Stomach (tissue), 19 donors: ENCODE measurements at regions of chr21 and their contacts with region 1.

Region 1: GRCh38 chr21:45140346-45140940 is 66.1 kb downstream of the ADARB1 start:
- DNase-seq: peak; percentile 71 to 95
- H3K4me3 ChIP-seq: no peak overlapping the region
- H3K27ac ChIP-seq: no peak overlapping the region
- H3K4me1 ChIP-seq: peaks cover 0 to 33% (median 15%) of the 10 kb centered on the region in 4 donors
- H3K27me3 ChIP-seq: no peaks in the 10 kb centered on the region
- CTCF ChIP-seq: peak in 5 of 7 experiments; percentile 58 to 86 (median 70)
- EP300 ChIP-seq: no peak
- POLR2A ChIP-seq: no peak

Region 2: DNA sequence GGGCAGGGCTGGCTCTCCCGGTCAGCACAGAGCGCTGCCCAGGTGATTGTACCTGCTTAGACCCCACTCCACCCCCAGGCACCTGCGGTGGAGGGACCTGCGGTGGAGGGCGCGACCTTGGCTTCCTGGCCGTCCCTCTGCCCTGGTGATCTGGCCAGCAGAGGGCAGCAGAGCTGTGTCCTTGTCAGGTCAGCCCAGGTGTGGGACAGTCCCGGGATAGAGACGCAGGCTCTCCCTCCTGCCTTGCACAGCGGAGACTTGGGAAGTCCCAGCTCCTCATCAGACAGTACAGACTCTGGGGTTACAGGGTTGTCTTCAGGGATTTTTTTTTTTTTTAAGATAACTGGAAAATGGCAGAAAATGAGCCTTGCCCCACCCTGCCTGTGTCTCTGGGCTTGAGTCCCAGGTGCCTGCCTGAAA is 190.7 kb before region 1 on chr21:
- intact Hi-C with region 1: loop called (anchors 5 kb)
- DNase-seq: peak; percentile 91
- H3K4me3 ChIP-seq: no peak overlapping the region
- H3K27ac ChIP-seq: peak overlapping the region in 1 of 5 donors; percentile 66
- H3K4me1 ChIP-seq: peaks cover 3 to 40% (median 22%) of the 10 kb centered on the region in 4 donors
- H3K27me3 ChIP-seq: no peaks in the 10 kb centered on the region
- CTCF ChIP-seq: peak in 6 of 7 experiments; percentile 65 to 94 (median 90)
- EP300 ChIP-seq: no peak
- POLR2A ChIP-seq: no peak

Region 3: DNA sequence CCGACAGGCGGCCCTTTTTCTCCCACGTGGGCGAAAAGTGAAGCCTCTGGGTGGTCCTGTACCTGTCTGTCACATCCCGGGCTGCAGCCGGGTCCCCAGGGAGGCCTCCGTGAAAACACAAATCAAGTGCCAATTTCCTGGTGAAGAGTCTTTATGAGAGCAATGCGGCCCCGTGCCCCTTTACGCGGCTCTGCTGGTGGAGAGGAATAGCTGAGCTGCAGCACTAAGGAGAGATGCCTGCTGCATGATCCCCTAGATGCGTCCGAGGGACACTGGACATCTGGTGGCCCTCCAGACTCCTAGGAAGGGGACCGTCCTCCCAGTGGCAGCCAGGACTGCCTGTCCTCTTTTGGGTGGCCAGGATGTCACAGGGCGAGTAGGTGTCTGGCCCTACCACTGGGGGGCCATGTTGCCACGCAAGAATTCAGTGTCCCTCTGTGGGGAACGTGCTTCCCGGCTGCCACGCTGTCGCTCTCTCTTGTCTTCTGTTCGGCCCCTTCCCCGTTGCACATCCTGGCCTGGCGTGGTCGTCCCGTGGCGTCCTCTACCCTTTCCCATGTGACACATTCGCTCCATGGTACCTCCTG is 303.2 kb after region 1 on chr21:
- intact Hi-C with region 1: loop called (anchors 10 kb)
- DNase-seq: no peak
- H3K4me3 ChIP-seq: no peak overlapping the region
- H3K27ac ChIP-seq: no peak overlapping the region
- H3K4me1 ChIP-seq: peaks cover 10 to 14% (median 12%) of the 10 kb centered on the region in 4 donors
- H3K27me3 ChIP-seq: peaks cover 0 to 14% (median 0%) of the 10 kb centered on the region in 3 donors
- CTCF ChIP-seq: no peak
- EP300 ChIP-seq: no peak
- POLR2A ChIP-seq: no peak